Ovary (tissue), 10 donors: ENCODE measurements at regions of chr16 and their contacts with region 1.

Region 1: GRCh38 chr16:58515125-58515870 is at the start of gene SETD6:
- DNase-seq: peak; percentile 79 to 92 (median 83)
- H3K4me3 ChIP-seq: peak within 1 kb of the TSS; percentile 89
- H3K27ac ChIP-seq: peak within 1 kb of the TSS; percentile 34 to 67
- H3K4me1 ChIP-seq: peaks cover 3% of the 10 kb centered on the region
- H3K27me3 ChIP-seq: no peaks in the 10 kb centered on the region
- CTCF ChIP-seq: peak in 2 of 3 donors; percentile 32 to 49
- EP300 ChIP-seq: no peak
- POLR2A ChIP-seq: no peak
- total RNA-seq, gene SETD6: 16.5 to 28.4 (median 19.3) TPM

Region 2: DNA sequence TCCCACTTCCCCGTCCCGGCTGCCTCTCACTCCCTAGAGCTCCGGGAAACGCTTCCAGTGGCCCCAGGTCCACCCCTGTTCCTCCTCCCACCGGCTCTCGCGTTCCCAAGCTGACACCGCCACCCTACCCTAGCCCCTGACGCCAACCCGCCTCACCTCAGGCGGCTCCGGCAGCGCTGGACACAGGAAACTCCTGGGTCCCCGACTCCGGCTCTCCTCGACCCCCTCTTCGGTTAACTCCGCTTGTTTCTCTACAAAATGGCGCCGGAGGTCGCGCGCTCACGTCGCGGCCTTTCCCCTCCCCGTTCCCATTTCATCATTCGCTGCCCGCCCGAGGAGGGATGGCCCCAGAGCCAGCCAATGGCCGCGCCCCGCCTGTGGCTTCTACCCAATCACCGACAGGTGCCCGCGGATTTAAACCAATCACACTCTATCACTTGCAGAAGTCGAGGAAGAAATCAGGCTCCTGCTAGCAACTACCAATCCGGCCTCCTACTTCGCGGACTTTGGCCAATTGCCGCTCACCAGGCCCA is 114.3 kb after region 1 on chr16 and contains the start of gene CNOT1:
- intact Hi-C with region 1: loop called in 2 of 4 experiments (anchors 10 kb)
- DNase-seq: peak; percentile 97 to 99 (median 98)
- H3K4me3 ChIP-seq: peak within 1 kb of the TSS; percentile 98
- H3K27ac ChIP-seq: peak within 1 kb of the TSS; percentile 92 to 96
- H3K4me1 ChIP-seq: peaks cover 8% of the 10 kb centered on the region
- H3K27me3 ChIP-seq: no peaks in the 10 kb centered on the region
- CTCF ChIP-seq: no peak
- EP300 ChIP-seq: no peak
- POLR2A ChIP-seq: peak; percentile 82
- total RNA-seq, gene CNOT1: 64.7 to 145 (median 126) TPM

Region 3: DNA sequence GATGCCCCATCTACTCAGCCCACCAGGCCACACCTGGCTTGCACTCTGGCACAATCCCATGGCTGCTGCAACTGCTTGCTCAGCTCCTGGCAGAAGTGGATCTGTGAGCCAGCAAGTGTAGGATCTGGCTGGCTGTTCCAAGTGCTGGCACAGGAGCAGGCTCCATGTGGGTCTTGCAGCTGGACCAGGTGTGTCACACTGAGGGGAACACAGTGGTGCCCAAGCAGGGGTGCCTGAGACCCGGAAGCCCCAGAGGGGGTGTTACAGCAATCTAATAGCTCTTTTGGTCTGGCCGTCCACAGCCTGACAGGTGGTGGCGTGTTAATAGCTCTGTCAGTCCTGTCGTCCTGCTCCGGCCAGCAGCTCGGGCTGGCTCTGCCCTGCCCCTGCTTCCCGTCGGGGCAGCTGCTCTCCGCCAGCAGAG is 238.4 kb after region 1 on chr16:
- intact Hi-C with region 1: no loop called
- DNase-seq: no peak
- H3K4me3 ChIP-seq: no peak overlapping the region
- H3K27ac ChIP-seq: no peak overlapping the region
- H3K4me1 ChIP-seq: no peaks in the 10 kb centered on the region
- H3K27me3 ChIP-seq: no peaks in the 10 kb centered on the region
- CTCF ChIP-seq: no peak
- EP300 ChIP-seq: no peak
- POLR2A ChIP-seq: no peak